Posterior cingulate gyrus (tissue), 11 donors: ENCODE measurements at regions of chr21 and their contacts with region 1.

Region 1: DNA sequence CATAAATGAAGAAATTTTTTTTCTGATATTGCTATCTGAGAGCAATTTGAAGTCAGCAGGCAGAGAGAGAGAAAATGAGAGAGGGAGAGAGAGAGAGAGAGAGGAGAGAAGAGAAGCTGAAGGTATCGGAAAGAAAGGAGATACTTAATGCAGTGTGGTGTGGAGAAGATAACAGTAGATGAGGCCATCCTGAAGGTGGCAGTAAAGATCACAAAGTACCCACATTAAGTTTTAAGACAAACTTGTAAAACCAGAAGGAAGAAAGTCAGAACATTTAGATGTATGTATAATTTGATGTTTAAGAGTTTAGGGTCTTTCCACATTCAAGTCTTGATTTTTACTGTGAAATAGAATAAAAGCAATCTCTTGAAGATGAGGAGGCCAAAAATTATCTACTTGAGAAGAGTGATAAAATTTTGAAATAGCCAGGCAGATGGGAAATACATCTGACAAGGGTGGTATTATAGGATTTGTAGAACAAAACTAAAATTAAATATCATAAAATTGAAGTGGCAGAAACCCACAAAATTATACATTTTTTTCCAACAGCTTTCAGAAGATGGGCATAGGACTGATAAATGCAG is 1753.4 kb downstream of the MRPL39 start:
- DNase-seq: no peak

Region 2: DNA sequence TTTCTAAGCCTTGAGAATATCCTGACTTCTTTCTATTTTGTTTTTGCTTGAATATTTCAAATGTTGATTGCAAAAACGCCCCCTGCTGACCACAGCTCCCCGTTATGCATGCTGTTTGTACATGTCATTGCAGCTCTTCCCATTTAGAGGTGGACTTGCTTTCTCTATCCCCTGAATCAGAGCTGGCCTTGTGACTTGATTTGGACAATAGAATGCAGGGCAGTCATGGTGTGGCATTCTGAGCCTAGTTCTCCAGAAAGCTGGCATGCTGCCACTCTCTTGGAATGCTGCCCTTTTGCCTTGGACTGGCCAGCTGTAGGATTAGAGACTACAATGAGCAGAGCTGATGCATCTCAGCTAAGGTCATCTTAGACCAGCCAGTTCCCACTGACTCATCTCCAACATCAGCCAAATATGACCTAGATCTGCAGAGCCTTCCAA is 191.9 kb after region 1 on chr21:
- intact Hi-C with region 1: loop called (anchors 10 kb)
- DNase-seq: peak; percentile 86 to 99 (median 92)

Region 3: GRCh38 chr21:25385911-25386474 is 1532.1 kb after region 1 on chr21:
- intact Hi-C with region 1: loop called (anchors 10 kb)
- DNase-seq: peak in 1 of 10 donors; percentile 58